ENCODE measurements at regions of chr1 and their contacts with region 1.

Region 1: GRCh38 chr1:193059268-193060225 is at the starts of genes RO60 and UCHL5:
- DNase-seq: peak; percentile 96 to 99
- H3K4me3 ChIP-seq: peak within 1 kb of the TSS; percentile 69 to 77 (median 73)
- H3K27ac ChIP-seq: peak within 1 kb of the TSS; percentile 95 to 99 (median 97)
- H3K4me1 ChIP-seq: peaks cover 23 to 59% (median 42%) of the 10 kb centered on the region in 4 donors
- H3K27me3 ChIP-seq: no peaks in the 10 kb centered on the region
- CTCF ChIP-seq: peak in 1 of 7 experiments; percentile 18
- EP300 ChIP-seq: no peak
- POLR2A ChIP-seq: peak in 2 of 4 donors; percentile 34 to 54
- total RNA-seq, gene RO60: 34.2 to 155 (median 79.9) TPM
- total RNA-seq, gene UCHL5: 8.7 to 69.8 (median 25.9) TPM

Region 2: GRCh38 chr1:193104906-193105820 is 45.6 kb after region 1 on chr1 and contains the start of gene GLRX2:
- intact Hi-C with region 1: loop called (anchors 10 kb)
- DNase-seq: peak; percentile 88 to 95
- H3K4me3 ChIP-seq: peak within 1 kb of the TSS; percentile 60 to 92 (median 80)
- H3K27ac ChIP-seq: peak within 1 kb of the TSS; percentile 87 to 96 (median 94)
- H3K4me1 ChIP-seq: peaks cover 5 to 29% (median 21%) of the 10 kb centered on the region in 4 donors
- H3K27me3 ChIP-seq: no peaks in the 10 kb centered on the region
- CTCF ChIP-seq: no peak
- EP300 ChIP-seq: no peak
- POLR2A ChIP-seq: peak in 1 of 4 donors; percentile 30
- total RNA-seq, gene GLRX2: 1.2 to 6.6 (median 4.3) TPM

Region 3: GRCh38 chr1:193141804-193142203 is 82.3 kb after region 1 on chr1:
- intact Hi-C with region 1: no loop called
- DNase-seq: no peak
- H3K4me3 ChIP-seq: no peak overlapping the region
- H3K27ac ChIP-seq: no peak overlapping the region
- H3K4me1 ChIP-seq: peaks cover 0 to 16% (median 6%) of the 10 kb centered on the region in 4 donors
- H3K27me3 ChIP-seq: no peaks in the 10 kb centered on the region
- CTCF ChIP-seq: no peak
- EP300 ChIP-seq: no peak
- POLR2A ChIP-seq: no peak

Measured in stomach (tissue), 19 donors.